Activated CD4-positive, alpha-beta T cell treated with anti-CD3 and anti-CD28 coated beads for 36 hours (primary cell): ENCODE measurements at regions of chr15 and their contacts with region 1.

Region 1: GRCh38 chr15:98292442-98293240 is 332.1 kb downstream of the ARRDC4 start:
- DNase-seq: peak; percentile 75
- ATAC-seq: peak; percentile 66
- H3K4me3 Mint-ChIP-seq: no peak overlapping the region
- H3K27ac Mint-ChIP-seq: no peak overlapping the region
- H3K4me1 Mint-ChIP-seq: peaks cover 1% of the 10 kb centered on the region
- H3K27me3 Mint-ChIP-seq: peaks cover 16% of the 10 kb centered on the region

Region 2: GRCh38 chr15:96670389-96670788 is 1622.3 kb before region 1 on chr15:
- CTCF ChIA-PET with region 1: no interaction called
- POLR2A ChIA-PET with region 1: no interaction called
- intact Hi-C with region 1: no loop called
- DNase-seq: no peak
- ATAC-seq: no peak
- H3K4me3 Mint-ChIP-seq: no peak overlapping the region
- H3K27ac Mint-ChIP-seq: no peak overlapping the region
- H3K4me1 Mint-ChIP-seq: no peaks in the 10 kb centered on the region
- H3K27me3 Mint-ChIP-seq: no peaks in the 10 kb centered on the region

Region 3: GRCh38 chr15:97903971-97904572 is 388.6 kb before region 1 on chr15:
- CTCF ChIA-PET with region 1: no interaction called
- POLR2A ChIA-PET with region 1: no interaction called
- intact Hi-C with region 1: loop called (anchors 2 to 5 kb)
- DNase-seq: peak; percentile 64
- ATAC-seq: peak; percentile 65
- H3K4me3 Mint-ChIP-seq: no peak overlapping the region
- H3K27ac Mint-ChIP-seq: no peak overlapping the region
- H3K4me1 Mint-ChIP-seq: peaks cover 2% of the 10 kb centered on the region
- H3K27me3 Mint-ChIP-seq: peaks cover 28% of the 10 kb centered on the region

Region 4: GRCh38 chr15:98241030-98241554 is 51.5 kb before region 1 on chr15:
- CTCF ChIA-PET with region 1: no interaction called
- POLR2A ChIA-PET with region 1: no interaction called
- intact Hi-C with region 1: no loop called
- DNase-seq: no peak
- ATAC-seq: no peak
- H3K4me3 Mint-ChIP-seq: no peak overlapping the region
- H3K27ac Mint-ChIP-seq: no peak overlapping the region
- H3K4me1 Mint-ChIP-seq: no peaks in the 10 kb centered on the region
- H3K27me3 Mint-ChIP-seq: peaks cover 8% of the 10 kb centered on the region

Region 5: DNA sequence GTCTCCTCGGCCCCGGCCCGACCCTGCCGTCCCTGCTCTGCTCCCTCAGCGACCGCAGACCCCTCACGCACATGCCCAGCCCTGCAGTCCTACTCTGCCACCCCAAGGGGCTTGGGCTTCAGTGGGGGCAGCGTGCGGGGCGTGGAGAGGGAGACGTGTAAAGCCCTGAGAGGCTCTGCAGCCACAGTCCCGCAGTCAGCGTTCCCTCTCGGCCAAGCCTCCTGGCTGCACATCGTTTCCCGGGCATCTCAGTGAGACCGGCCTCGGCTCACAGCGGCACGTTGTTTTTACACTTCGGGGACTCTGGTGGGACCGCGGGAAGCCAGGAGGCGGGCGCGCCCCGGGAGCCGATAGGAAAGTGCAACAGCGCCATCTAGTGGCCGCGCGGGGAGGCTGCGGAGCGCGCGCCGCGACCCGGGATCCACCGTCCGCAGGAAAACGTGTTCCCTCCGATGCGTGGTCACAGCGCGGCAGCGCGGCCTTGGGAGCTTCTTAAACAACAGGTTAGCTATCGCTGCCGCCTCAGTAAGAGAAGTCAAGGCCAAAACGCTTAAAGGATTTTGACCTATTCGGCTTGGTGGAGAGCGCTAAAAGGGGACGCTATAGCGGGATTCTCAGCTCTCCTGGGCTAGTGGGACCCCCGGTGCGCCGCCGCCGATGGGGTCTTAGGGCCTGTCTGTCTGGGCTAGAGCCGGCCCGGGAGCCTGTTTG is 128.9 kb after region 1 on chr15:
- CTCF ChIA-PET with region 1: interaction called, 4 read pairs
- POLR2A ChIA-PET with region 1: no interaction called
- intact Hi-C with region 1: loop called (anchors 1 kb)
- DNase-seq: peak; percentile 77
- ATAC-seq: peak; percentile 78
- H3K4me3 Mint-ChIP-seq: no peak overlapping the region
- H3K27ac Mint-ChIP-seq: no peak overlapping the region
- H3K4me1 Mint-ChIP-seq: peaks cover 4% of the 10 kb centered on the region
- H3K27me3 Mint-ChIP-seq: peaks cover 38% of the 10 kb centered on the region